HepG2 (cell line): ENCODE measurements at regions of chr12 and their contacts with region 1.

Region 1: DNA sequence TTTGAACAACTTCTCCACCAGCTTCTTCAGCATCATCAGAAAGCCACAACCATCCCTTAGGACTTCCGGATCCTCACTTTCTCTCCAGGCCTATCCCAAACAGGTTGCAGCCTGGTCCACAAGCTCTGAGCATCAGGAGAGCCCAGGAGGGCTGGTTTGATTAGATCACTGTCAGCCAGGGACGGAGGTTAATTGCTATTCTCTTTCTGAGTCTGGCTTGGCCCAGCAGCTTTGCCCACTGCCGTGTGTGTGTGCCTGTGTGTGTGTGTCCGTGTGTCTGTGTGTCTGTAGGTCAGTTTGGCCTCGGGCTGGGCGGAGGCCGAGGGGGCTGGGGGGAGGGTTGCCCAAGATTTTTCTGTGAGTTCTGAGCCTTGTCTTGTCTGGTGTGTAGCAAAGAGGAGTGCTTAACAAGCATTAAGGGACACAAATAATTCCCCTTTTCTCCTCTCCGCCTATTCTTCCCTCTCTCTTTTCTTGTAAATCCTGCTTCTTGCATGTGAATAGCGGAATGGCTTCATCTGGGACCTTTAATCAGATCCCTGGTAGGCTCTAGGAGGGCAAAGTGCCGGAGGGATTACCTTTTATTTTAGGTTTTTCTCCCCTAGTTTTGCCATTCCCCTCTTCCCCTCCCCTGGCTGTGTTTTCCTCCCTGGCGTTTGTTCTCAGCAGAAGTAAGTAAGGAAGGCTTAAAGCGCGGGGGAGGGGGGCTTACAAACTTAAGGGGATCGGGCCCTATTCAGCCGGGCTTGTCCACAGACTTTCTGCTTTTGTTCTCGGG is 138.2 kb upstream of the LHX5 start:
- DNase-seq: no peak
- ATAC-seq: no peak
- H3K4me3 ChIP-seq: no peak overlapping the region
- H3K27ac ChIP-seq: no peak overlapping the region
- H3K4me1 ChIP-seq: no peaks in the 10 kb centered on the region
- H3K27me3 ChIP-seq: peaks cover 2 to 31% of the 10 kb centered on the region in 2 experiments; a peak in 4 of 5 replicates
- CTCF ChIP-seq: no peak
- EP300 ChIP-seq: no peak
- POLR2A ChIP-seq: no peak
- RAD21 ChIP-seq: no peak

Region 2: DNA sequence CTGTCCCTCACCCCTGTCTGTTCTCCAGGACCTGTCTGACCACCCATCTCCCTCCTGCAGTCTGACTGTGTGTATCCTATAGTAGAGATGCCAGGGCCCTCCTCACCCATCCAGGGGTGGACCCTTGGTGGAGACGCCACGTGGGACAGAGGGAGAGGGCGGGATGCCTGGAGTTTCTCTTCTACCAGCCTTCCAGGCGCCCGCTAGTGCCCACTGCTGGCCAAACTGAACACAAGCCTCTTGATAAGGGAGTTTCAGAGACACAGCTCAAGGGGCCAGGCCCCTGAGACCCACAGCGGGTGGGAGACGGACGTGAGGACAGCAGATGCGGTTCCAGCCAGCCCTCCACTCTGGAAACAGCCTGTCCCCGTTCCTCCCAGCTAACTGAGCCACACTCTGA is 209.0 kb after region 1 on chr12:
- CTCF ChIA-PET with region 1: no interaction called
- POLR2A ChIA-PET with region 1: no interaction called
- in situ Hi-C with region 1: no loop called
- intact Hi-C with region 1: loop called (anchors 5 kb)
- DNase-seq: peak; percentile 27
- ATAC-seq: peak; percentile 65
- H3K4me3 ChIP-seq: no peak overlapping the region
- H3K27ac ChIP-seq: no peak overlapping the region
- H3K4me1 ChIP-seq: peaks cover 17% of the 10 kb centered on the region
- H3K27me3 ChIP-seq: no peaks in the 10 kb centered on the region
- CTCF ChIP-seq: peak; percentile 74
- EP300 ChIP-seq: no peak
- POLR2A ChIP-seq: no peak
- RAD21 ChIP-seq: peak; percentile 75